SK-N-SH (cell line): ENCODE measurements at regions of chr17 and their contacts with region 1.

Region 1: GRCh38 chr17:46193626-46194392 is 580 bp upstream of the KANSL1 start:
- DNase-seq: peak; percentile 98
- H3K4me3 ChIP-seq: peak overlapping the region; percentile 76 to 78
- H3K27ac ChIP-seq: peak overlapping the region; percentile 85 to 97
- H3K4me1 ChIP-seq: peaks cover 14 to 15% of the 10 kb centered on the region in 2 experiments; a peak in 3 of 4 replicates
- H3K27me3 ChIP-seq: no peaks in the 10 kb centered on the region
- CTCF ChIP-seq: peak; percentile 31
- EP300 ChIP-seq: peak; percentile 2 to 11; a peak in 2 of 4 replicates
- RAD21 ChIP-seq: no peak

Region 2: DNA sequence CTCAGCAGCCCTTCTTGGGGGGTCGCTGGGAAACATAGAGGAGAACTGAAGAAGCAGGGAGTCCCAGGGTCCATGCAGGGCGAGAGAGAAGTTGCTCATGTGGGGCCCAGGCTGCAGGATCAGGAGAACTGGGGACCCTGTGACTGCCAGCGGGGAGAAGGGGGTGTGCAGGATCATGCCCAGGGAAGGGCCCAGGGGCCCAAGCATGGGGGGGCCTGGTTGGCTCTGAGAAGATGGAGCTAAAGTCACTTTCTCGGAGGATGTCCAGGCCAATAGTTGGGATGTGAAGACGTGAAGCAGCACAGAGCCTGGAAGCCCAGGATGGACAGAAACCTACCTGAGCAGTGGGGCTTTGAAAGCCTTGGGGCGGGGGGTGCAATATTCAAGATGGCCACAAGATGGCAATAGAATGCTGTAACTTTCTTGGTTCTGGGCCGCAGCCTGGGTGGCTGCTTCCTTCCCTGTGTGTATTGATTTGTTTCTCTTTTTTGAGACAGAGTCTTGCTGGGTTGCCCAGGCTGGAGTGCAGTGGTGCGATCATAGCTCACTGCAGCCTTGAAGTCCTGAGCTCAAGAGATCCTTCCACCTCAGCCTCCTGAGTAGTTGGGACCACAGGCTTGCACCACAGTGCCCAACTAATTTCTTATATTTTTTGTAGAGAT is 191.4 kb before region 1 on chr17:
- CTCF ChIA-PET with region 1: interaction called, 41 read pairs
- POLR2A ChIA-PET with region 1: no interaction called
- DNase-seq: peak; percentile 89
- H3K4me3 ChIP-seq: no peak overlapping the region
- H3K27ac ChIP-seq: no peak overlapping the region
- H3K4me1 ChIP-seq: peaks cover 0 to 9% of the 10 kb centered on the region in 2 experiments; a peak in 1 of 4 replicates
- H3K27me3 ChIP-seq: no peaks in the 10 kb centered on the region
- CTCF ChIP-seq: peak; percentile 98
- EP300 ChIP-seq: no peak
- RAD21 ChIP-seq: peak; percentile 96

Region 3: DNA sequence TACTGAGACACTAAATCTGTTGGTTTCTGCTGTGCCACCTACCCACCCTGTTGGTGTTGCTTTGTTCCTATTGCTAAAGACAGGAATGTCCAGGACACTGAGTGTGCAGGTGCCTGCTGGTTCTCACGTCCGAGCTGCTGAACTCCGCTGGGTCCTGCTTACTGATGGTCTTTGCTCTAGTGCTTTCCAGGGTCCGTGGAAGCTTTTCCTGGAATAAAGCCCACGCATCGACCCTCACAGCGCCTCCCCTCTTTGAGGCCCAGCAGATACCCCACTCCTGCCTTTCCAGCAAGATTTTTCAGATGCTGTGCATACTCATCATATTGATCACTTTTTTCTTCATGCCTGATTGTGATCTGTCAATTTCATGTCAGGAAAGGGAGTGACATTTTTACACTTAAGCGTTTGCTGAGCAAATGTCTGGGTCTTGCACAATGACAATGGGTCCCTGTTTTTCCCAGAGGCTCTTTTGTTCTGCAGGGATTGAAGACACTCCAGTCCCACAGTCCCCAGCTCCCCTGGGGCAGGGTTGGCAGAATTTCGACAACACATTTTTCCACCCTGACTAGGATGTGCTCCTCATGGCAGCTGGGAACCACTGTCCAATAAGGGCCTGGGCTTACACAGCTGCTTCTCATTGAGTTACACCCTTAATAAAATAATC is 180.2 kb before region 1 on chr17:
- CTCF ChIA-PET with region 1: interaction called, 13 read pairs
- POLR2A ChIA-PET with region 1: no interaction called
- DNase-seq: peak; percentile 65
- H3K4me3 ChIP-seq: no peak overlapping the region
- H3K27ac ChIP-seq: peak overlapping the region in 1 of 2 experiments; percentile 70; a peak in 2 of 4 replicates
- H3K4me1 ChIP-seq: peaks cover 0 to 23% of the 10 kb centered on the region in 2 experiments; a peak in 1 of 4 replicates
- H3K27me3 ChIP-seq: no peaks in the 10 kb centered on the region
- CTCF ChIP-seq: no peak
- EP300 ChIP-seq: 0 out of 4 replicates have a peak, but pooled peaks of 1 of the 2 experiments have one; percentile 2
- RAD21 ChIP-seq: no peak

Region 4: DNA sequence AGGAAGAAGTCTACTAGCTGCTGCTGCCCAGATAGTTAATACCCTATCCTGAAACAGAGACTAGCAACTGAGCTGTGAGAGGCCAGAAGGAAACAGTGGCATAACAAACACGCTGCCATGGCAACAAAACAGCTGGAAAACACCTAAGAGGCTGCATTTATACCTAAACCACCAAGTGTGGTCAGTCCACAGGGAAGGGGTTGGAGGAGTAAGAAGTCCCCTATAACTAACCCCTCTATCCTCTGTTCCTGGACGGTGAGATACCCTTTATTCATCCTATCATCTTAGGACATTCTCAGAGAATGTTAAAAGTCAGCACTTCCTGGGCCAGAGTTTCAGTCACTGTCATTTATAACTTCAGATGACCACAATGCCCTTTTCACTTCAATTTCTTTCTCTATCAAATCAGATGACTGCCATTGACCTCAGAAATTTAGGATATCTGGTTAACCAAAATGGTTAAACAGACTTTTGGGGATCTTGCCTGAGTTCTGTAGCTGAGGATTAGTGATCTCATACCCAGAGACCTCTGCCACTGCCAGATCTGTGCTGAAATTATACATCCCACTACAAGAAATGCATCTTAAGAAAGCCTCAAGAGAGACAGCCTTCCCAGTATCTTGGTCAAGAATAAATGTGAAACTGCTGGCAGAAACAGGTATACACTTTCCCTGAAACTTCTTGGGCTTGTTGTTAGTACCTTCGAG is 158.5 kb before region 1 on chr17:
- CTCF ChIA-PET with region 1: interaction called, 28 read pairs
- POLR2A ChIA-PET with region 1: no interaction called
- DNase-seq: no peak
- H3K4me3 ChIP-seq: no peak overlapping the region
- H3K27ac ChIP-seq: no peak overlapping the region
- H3K4me1 ChIP-seq: peaks cover 0 to 23% of the 10 kb centered on the region in 2 experiments; a peak in 2 of 4 replicates
- H3K27me3 ChIP-seq: no peaks in the 10 kb centered on the region
- CTCF ChIP-seq: no peak
- EP300 ChIP-seq: no peak
- RAD21 ChIP-seq: no peak

Region 5: GRCh38 chr17:46078675-46079074 is 115.1 kb before region 1 on chr17:
- CTCF ChIA-PET with region 1: interaction called, 19 read pairs
- POLR2A ChIA-PET with region 1: interaction called, 5 read pairs
- DNase-seq: no peak
- H3K4me3 ChIP-seq: no peak overlapping the region
- H3K27ac ChIP-seq: no peak overlapping the region
- H3K4me1 ChIP-seq: peaks cover 3 to 8% of the 10 kb centered on the region in 2 experiments; a peak in 3 of 4 replicates
- H3K27me3 ChIP-seq: no peaks in the 10 kb centered on the region
- CTCF ChIP-seq: no peak
- EP300 ChIP-seq: no peak
- RAD21 ChIP-seq: no peak

Region 6: DNA sequence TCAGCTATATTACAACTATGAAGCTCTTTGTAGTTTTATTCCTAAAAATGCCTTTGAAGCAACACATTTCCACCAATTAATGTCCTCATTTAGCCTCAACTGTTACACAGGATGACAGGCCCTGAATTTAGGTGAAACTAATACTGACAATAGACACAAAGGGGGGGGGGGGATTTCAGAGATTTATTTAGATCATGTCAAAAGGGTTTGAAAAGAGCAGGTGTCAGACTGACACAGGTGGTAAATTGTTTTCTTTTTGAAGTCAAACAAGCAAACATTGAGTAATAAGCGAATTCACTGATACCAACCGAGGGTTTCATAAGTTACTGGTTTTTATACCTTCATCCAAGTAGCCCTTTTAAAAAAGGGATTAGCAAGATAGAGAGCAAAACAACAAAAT is 41.4 kb before region 1 on chr17:
- CTCF ChIA-PET with region 1: interaction called, 14 read pairs
- POLR2A ChIA-PET with region 1: no interaction called
- DNase-seq: no peak
- H3K4me3 ChIP-seq: no peak overlapping the region; a peak in 1 of 4 replicates
- H3K27ac ChIP-seq: no peak overlapping the region
- H3K4me1 ChIP-seq: peaks cover 24 to 44% of the 10 kb centered on the region in 2 experiments; a peak in 3 of 4 replicates
- H3K27me3 ChIP-seq: no peaks in the 10 kb centered on the region
- CTCF ChIP-seq: no peak
- EP300 ChIP-seq: no peak
- RAD21 ChIP-seq: no peak

Region 7: DNA sequence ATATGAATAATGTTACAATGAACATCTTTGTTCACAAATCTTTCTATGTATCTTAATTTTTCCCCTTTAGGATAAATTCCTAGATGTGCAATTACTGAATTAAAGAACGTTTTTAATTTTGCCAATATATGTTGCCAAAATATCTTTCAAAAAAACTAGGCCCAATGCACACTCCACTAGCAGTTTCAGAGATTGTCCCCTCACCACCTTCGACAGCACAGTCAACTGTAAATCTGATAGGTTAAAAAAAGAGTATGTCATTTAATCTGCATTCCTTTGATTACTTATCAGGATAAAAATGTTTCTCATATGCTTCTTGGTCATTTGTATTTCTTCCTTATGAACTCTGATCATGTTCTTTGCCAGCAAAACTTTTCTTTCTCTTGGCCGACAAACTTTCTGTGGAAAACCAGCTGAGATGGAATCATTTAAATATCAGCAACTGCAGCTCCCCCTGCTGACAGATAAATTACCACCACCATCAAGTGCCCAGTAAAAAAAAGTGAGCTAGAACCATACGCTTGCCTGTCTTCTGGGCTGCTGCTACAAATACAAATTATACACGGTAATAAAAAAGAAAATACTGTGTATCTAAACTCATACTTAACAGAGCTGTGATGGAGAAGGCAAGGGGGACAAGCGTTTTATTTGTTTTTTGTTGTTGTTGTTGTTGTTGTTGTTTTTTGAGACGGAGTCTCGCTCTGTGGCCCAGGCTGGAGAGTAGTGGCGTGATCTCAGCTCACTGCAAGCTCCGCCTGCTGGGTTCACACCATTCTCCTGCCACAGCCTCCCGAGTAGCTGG is 19.0 kb after region 1 on chr17:
- CTCF ChIA-PET with region 1: interaction called, 49 read pairs
- POLR2A ChIA-PET with region 1: no interaction called
- DNase-seq: peak; percentile 77
- H3K4me3 ChIP-seq: peak overlapping the region in 1 of 2 experiments; percentile 16; a peak in 1 of 4 replicates
- H3K27ac ChIP-seq: no peak overlapping the region
- H3K4me1 ChIP-seq: no peaks in the 10 kb centered on the region
- H3K27me3 ChIP-seq: no peaks in the 10 kb centered on the region
- CTCF ChIP-seq: peak; percentile 98
- EP300 ChIP-seq: no peak
- RAD21 ChIP-seq: peak; percentile 83